Activated B cell treated with CpG ODN at 0.5 μM for 24 hours (primary cell): ENCODE measurements at regions of chr16 and their contacts with region 1.

Region 1: GRCh38 chr16:15636392-15636873 is 6.5 kb downstream of the MARF1 start:
- DNase-seq: no peak
- ATAC-seq: peak; percentile 62
- H3K4me3 Mint-ChIP-seq: peak overlapping the region; percentile 76
- H3K27ac Mint-ChIP-seq: peak overlapping the region; percentile 88
- H3K4me1 Mint-ChIP-seq: peaks cover 99% of the 10 kb centered on the region
- H3K27me3 Mint-ChIP-seq: no peaks in the 10 kb centered on the region
- CTCF ChIP-seq: no peak

Region 2: DNA sequence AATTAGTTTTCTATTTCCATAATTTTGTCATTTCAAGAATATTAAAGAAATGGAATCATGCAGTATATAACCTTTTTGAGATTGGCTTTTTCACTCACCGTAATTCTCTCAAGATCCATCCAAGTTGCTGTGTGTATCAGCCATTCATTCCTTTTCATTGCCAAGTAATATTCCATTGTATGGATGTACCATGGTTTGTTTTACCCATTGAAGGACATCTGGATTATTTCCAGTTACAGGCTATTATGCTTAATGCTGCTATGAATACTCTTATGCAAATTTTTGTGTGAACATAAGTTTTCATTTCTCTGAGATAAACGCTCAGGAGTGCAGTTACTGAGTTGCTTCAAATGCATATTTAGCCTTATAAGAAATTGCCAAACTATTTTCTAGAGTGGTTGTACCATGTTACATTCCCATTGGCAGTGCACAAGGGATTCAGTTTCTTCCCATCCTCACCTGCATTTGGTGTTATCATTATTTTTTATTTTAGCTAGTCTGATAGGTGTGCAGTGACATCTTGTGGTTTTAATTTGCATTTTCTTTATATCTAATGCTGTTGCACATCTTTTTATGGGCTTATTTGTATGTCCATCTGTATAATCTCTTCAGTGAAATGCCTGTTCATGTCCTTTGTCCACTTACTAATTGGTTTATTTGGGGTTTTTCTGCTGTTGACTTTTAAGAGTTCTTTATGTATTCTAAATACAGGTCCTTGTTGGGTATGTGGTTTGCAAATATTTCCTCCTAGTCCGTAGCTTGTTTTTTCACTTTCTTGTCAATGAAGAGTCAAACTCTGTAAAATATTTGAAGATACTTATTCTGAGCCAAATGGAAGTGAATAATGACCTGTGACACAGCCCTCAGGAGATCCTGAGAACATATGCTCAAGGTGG is 169.3 kb before region 1 on chr16:
- CTCF ChIA-PET with region 1: no interaction called
- POLR2A ChIA-PET with region 1: no interaction called
- intact Hi-C with region 1: no loop called
- DNase-seq: no peak
- ATAC-seq: no peak
- H3K4me3 Mint-ChIP-seq: no peak overlapping the region
- H3K27ac Mint-ChIP-seq: no peak overlapping the region
- H3K4me1 Mint-ChIP-seq: no peaks in the 10 kb centered on the region
- H3K27me3 Mint-ChIP-seq: no peaks in the 10 kb centered on the region
- CTCF ChIP-seq: no peak

Region 3: GRCh38 chr16:15592324-15592723 is 44.1 kb before region 1 on chr16:
- CTCF ChIA-PET with region 1: no interaction called
- POLR2A ChIA-PET with region 1: interaction called, 142 read pairs
- intact Hi-C with region 1: loop called (anchors 1 kb)
- DNase-seq: peak; percentile 21
- ATAC-seq: no peak
- H3K4me3 Mint-ChIP-seq: no peak overlapping the region
- H3K27ac Mint-ChIP-seq: peak overlapping the region; percentile 84
- H3K4me1 Mint-ChIP-seq: peaks cover 65% of the 10 kb centered on the region
- H3K27me3 Mint-ChIP-seq: no peaks in the 10 kb centered on the region
- CTCF ChIP-seq: no peak

Region 4: DNA sequence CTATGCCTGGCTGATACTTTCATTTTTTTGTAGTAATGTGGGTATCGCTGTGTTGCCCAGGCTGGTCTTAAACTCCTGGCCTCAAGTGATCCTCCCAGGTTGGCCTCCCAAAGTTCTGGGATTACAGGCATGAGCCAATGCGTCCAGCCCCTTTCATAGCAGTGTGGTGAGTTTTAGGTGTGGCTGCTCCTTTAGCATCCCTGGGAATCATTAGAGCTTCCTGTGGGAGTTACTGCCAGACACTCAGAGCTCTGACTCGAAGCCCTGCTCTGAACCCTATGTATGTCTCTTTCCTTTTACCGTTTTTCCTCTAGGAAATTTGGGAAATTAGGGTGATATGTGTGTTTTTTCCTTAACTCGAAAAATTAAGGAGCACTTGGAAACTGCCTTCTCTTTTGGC is 58.1 kb after region 1 on chr16:
- CTCF ChIA-PET with region 1: no interaction called
- POLR2A ChIA-PET with region 1: no interaction called
- intact Hi-C with region 1: no loop called
- DNase-seq: no peak
- ATAC-seq: no peak
- H3K4me3 Mint-ChIP-seq: no peak overlapping the region
- H3K27ac Mint-ChIP-seq: no peak overlapping the region
- H3K4me1 Mint-ChIP-seq: no peaks in the 10 kb centered on the region
- H3K27me3 Mint-ChIP-seq: no peaks in the 10 kb centered on the region
- CTCF ChIP-seq: no peak